ENCODE measurements at regions of chr20 and their contacts with region 1.

Region 1: DNA sequence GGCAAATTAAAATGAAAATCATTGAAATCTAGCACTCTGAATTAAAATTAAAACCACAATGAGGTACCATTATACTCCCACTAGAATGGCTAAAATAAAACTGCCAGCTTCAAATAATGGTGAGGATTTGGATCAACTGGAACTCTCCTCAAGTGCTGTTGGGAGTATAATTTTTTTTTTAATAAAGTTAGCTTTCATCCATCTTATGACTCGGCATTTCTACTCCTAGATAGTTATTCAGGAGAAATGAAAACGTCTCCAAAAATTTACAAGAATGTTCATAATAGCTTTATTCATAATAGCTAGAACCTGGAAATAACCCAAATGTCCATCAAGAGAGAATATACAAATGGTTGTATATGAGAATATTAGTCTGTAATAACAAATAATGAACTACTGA is 63.2 kb downstream of the ASXL1 start:
- DNase-seq: no peak
- ATAC-seq: no peak
- H3K4me3 ChIP-seq: no peak overlapping the region
- H3K27ac ChIP-seq: no peak overlapping the region
- H3K4me1 ChIP-seq: no peaks in the 10 kb centered on the region
- H3K27me3 ChIP-seq: no peaks in the 10 kb centered on the region
- CTCF ChIP-seq: no peak

Region 2: GRCh38 chr20:32358883-32359632 is 62.2 kb before region 1 on chr20:
- CTCF ChIA-PET with region 1: no interaction called
- POLR2A ChIA-PET with region 1: no interaction called
- in situ Hi-C with region 1: loop called (anchors 5 kb)
- intact Hi-C with region 1: no loop called
- DNase-seq: no peak
- ATAC-seq: peak; percentile 61
- H3K4me3 ChIP-seq: peak overlapping the region; percentile 73 to 97
- H3K27ac ChIP-seq: peak overlapping the region; percentile 95
- H3K4me1 ChIP-seq: peaks cover 65% of the 10 kb centered on the region
- H3K27me3 ChIP-seq: no peaks in the 10 kb centered on the region
- CTCF ChIP-seq: no peak